MCF 10A (cell line): ENCODE measurements at regions of chr2 and their contacts with region 1.

Region 1: DNA sequence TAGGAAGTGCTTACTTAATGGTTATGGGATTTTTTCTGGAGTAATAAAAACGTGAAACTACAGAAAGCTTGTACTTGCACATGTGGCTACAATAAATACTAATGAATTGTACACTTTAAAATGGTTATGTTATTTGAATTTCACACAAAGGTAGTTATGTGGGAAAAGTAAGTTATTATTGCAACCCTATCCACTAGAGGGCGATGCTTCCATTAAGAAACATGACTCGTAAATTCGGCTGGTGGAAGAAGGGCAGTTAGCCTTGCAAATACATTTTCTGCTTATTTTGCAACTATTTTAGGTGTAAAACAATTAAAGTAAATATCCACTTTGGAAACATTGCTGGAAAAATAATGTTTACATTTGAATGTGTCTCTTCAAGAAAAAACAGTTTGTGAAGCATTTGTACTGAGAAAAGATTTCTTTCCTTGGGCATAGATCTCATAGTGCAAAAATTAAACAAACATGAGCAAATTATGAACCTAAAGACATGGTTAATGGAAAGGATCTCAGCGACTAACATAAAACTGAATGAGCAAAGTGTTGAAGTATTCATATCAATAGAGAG is 68.1 kb upstream of the CSRNP3 start:
- DNase-seq: peak; percentile 68
- H3K4me3 Mint-ChIP-seq: no peak overlapping the region
- H3K27ac Mint-ChIP-seq: no peak overlapping the region
- H3K4me1 Mint-ChIP-seq: no peaks in the 10 kb centered on the region
- H3K27me3 Mint-ChIP-seq: peaks cover 78% of the 10 kb centered on the region
- CTCF ChIP-seq: peak; percentile 61

Region 2: DNA sequence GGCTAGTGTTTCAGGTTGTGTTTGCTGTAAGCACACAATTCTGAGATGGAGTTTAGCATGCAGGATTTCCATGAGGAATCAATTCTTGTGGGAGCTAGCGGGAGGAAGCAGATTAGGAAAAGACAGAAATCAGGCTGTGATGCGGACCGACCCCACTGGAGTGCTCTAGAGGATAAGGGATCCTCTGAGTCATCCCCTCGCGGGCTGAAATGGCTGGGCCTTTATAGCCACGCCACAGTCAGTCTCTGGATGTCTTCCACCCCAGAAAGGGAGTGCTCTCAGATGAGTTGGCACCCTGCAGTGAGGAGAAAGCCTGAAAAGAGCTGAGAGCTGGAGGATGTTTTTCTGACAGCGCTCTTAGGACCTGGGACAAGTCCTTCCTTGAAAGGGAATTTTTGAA is 290.2 kb after region 1 on chr2:
- CTCF ChIA-PET with region 1: interaction called, 45 read pairs
- POLR2A ChIA-PET with region 1: no interaction called
- intact Hi-C with region 1: no loop called
- DNase-seq: peak; percentile 19
- H3K4me3 Mint-ChIP-seq: no peak overlapping the region
- H3K27ac Mint-ChIP-seq: no peak overlapping the region
- H3K4me1 Mint-ChIP-seq: no peaks in the 10 kb centered on the region
- H3K27me3 Mint-ChIP-seq: peaks cover 22% of the 10 kb centered on the region
- CTCF ChIP-seq: no peak

Region 3: GRCh38 chr2:165698444-165698894 is 297.1 kb after region 1 on chr2:
- CTCF ChIA-PET with region 1: interaction called, 45 read pairs
- POLR2A ChIA-PET with region 1: no interaction called
- intact Hi-C with region 1: loop called (anchors 1 kb)
- DNase-seq: peak; percentile 68
- H3K4me3 Mint-ChIP-seq: no peak overlapping the region
- H3K27ac Mint-ChIP-seq: no peak overlapping the region
- H3K4me1 Mint-ChIP-seq: no peaks in the 10 kb centered on the region
- H3K27me3 Mint-ChIP-seq: peaks cover 32% of the 10 kb centered on the region
- CTCF ChIP-seq: peak; percentile 50

Region 4: GRCh38 chr2:165778653-165779451 is 377.5 kb after region 1 on chr2:
- CTCF ChIA-PET with region 1: no interaction called
- POLR2A ChIA-PET with region 1: no interaction called
- intact Hi-C with region 1: loop called (anchors 10 kb)
- DNase-seq: peak; percentile 18
- H3K4me3 Mint-ChIP-seq: no peak overlapping the region
- H3K27ac Mint-ChIP-seq: no peak overlapping the region
- H3K4me1 Mint-ChIP-seq: peaks cover 5% of the 10 kb centered on the region
- H3K27me3 Mint-ChIP-seq: no peaks in the 10 kb centered on the region
- CTCF ChIP-seq: no peak